WTC11 (cell line): ENCODE measurements at regions of chr11 and their contacts with region 1.

Region 1: DNA sequence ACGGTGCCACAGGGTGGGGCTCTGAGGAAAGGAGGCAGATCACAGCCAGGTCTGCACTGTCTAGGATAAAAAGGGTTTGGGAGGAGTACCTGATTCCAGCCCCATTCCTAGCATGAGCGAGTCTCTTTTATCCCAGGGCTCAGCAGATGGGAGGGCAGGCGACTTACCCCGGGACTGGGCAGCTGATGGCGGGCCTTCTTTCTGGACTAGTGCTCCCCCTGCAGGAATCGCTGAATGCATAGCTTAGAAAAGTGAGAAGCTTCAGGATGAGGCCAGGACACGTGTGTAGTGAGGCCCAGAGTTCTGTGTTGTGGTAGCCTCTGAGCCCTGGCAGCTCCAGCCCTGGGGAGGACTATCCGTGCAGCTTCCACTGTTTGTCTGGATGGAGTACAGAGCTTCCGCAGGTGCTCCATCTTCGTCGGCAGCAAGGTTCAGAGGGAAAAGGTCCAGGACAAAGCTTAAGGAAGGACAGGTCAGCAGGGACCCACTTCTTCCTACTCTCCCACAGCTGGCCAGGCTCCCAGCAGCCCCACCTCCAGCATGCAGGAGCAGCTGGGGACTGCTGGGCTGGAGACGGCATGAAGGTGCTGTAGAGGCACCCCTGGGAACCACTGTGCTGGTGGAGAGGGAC is 30.4 kb downstream of the COMMD9 start:
- DNase-seq: peak; percentile 74
- ATAC-seq: peak; percentile 93
- H3K4me3 Mint-ChIP-seq: no peak overlapping the region
- H3K27ac Mint-ChIP-seq: no peak overlapping the region
- H3K4me1 Mint-ChIP-seq: peaks cover 5% of the 10 kb centered on the region; the same call in 1 of the 2 replicates
- H3K27me3 Mint-ChIP-seq: peaks cover 12% of the 10 kb centered on the region
- CTCF ChIP-seq: 0 out of 2 replicates have a peak, but pooled peaks have one; percentile 20

Region 2: GRCh38 chr11:35485656-35486322 is 773.1 kb before region 1 on chr11:
- CTCF ChIA-PET with region 1: interaction called, 10 read pairs
- POLR2A ChIA-PET with region 1: no interaction called
- DNase-seq: peak; percentile 93
- ATAC-seq: peak; percentile 98
- H3K4me3 Mint-ChIP-seq: no peak overlapping the region
- H3K27ac Mint-ChIP-seq: no peak overlapping the region
- H3K4me1 Mint-ChIP-seq: no peaks in the 10 kb centered on the region
- H3K27me3 Mint-ChIP-seq: peaks cover 12% of the 10 kb centered on the region; the same call in 1 of the 2 replicates
- CTCF ChIP-seq: peak; percentile 82

Region 3: GRCh38 chr11:35617687-35618496 is 641.0 kb before region 1 on chr11 and contains the start of gene FJX1:
- CTCF ChIA-PET with region 1: interaction called, 11 read pairs
- POLR2A ChIA-PET with region 1: interaction called, 3 read pairs
- DNase-seq: peak; percentile 76
- ATAC-seq: peak; percentile 54
- H3K4me3 Mint-ChIP-seq: peak within 1 kb of the TSS; percentile 76
- H3K27ac Mint-ChIP-seq: peak within 1 kb of the TSS; percentile 60; the same call in 1 of the 2 replicates
- H3K4me1 Mint-ChIP-seq: peaks cover 47% of the 10 kb centered on the region
- H3K27me3 Mint-ChIP-seq: peaks cover 44% of the 10 kb centered on the region
- CTCF ChIP-seq: no peak
- total RNA-seq, gene FJX1: 8.3 to 12.0 TPM (median 11.0 TPM) in 3 replicates

Region 4: DNA sequence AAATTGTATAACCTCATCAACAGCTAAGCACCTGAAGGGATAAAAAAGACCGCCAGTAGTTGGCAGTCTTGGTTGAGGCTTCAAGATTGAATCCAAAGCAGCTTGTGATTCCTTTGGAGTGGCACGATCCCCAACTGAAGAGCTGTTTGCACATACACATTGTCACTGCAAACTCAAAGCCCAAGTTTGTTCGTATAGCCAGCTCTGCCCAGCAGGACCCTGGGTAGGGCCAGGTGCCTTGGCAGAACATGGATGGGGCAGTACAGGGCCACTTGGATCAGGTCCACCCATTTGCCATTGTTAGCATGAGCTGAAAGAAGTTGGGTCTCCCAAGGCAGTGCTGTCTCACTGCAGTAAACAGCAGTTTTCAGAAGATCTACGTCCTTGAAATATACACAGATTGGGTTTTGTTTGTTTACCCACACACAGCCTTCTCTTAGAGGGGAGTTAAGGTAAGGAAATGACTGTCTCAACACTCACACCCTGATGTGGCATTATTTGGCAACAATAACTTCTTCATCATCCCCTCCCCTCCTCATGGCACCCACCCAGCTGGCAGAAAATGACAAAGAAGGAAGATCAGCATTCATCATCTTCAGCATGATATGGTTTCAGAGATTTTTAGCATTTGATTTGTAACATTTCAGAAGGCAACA is 102.6 kb before region 1 on chr11:
- CTCF ChIA-PET with region 1: interaction called, 45 read pairs
- POLR2A ChIA-PET with region 1: no interaction called
- DNase-seq: no peak
- ATAC-seq: peak; percentile 28
- H3K4me3 Mint-ChIP-seq: no peak overlapping the region
- H3K27ac Mint-ChIP-seq: no peak overlapping the region
- H3K4me1 Mint-ChIP-seq: peaks cover 32% of the 10 kb centered on the region
- H3K27me3 Mint-ChIP-seq: no peaks in the 10 kb centered on the region
- CTCF ChIP-seq: no peak